ENCODE measurements at regions of chr7 and their contacts with region 1.

Region 1: GRCh38 chr7:30983042-30983913 is 19.5 kb downstream of the GHRHR start:
- DNase-seq: peak; percentile 90 to 99
- H3K4me3 ChIP-seq: peak overlapping the region in 1 of 4 experiments; percentile 59; a peak in 1 of 8 replicates
- H3K27ac ChIP-seq: no peak overlapping the region
- H3K4me1 ChIP-seq: peaks cover 13 to 41% (median 30%) of the 10 kb centered on the region in 4 experiments
- H3K27me3 ChIP-seq: peaks cover 0 to 7% (median 2%) of the 10 kb centered on the region in 4 experiments; a peak in 3 of 7 replicates
- CTCF ChIP-seq: peak; percentile 94 to 99 (median 99)
- EP300 ChIP-seq: no peak
- POLR2A ChIP-seq: no peak
- RAD21 ChIP-seq: peak; percentile 96 to 97

Region 2: DNA sequence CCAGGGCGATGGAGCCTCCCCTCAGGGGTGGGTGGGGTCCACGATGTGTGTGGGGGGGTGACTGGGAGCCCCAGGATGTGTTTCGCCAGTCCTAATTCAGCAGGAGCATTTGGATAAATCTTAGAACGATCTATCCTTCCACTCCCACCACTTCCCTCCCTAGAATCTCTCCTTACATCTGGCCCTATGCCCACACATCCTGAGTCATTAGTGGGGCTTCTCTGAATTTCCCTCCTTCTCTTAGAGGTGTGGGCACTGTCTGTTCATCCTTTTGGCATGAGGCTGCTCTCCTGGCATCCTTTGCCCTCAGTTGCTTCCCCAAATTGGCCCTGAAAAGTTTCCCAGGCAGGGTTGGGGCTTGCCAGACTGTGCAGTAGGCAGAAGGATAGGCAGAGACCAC is 17.9 kb before region 1 on chr7:
- CTCF ChIA-PET with region 1: interaction called, 65 read pairs
- POLR2A ChIA-PET with region 1: no interaction called
- DNase-seq: no peak
- H3K4me3 ChIP-seq: no peak overlapping the region
- H3K27ac ChIP-seq: no peak overlapping the region
- H3K4me1 ChIP-seq: no peaks in the 10 kb centered on the region
- H3K27me3 ChIP-seq: no peaks in the 10 kb centered on the region; a peak in 1 of 7 replicates
- CTCF ChIP-seq: no peak
- EP300 ChIP-seq: no peak
- POLR2A ChIP-seq: no peak
- RAD21 ChIP-seq: no peak

Region 3: GRCh38 chr7:31027161-31027965 is 44.1 kb after region 1 on chr7:
- CTCF ChIA-PET with region 1: interaction called, 58 read pairs
- POLR2A ChIA-PET with region 1: interaction called, 9 read pairs
- DNase-seq: peak in 1 of 2 experiments; percentile 55
- H3K4me3 ChIP-seq: no peak overlapping the region
- H3K27ac ChIP-seq: no peak overlapping the region
- H3K4me1 ChIP-seq: peaks cover 3 to 14% (median 10%) of the 10 kb centered on the region in 4 experiments
- H3K27me3 ChIP-seq: no peaks in the 10 kb centered on the region
- CTCF ChIP-seq: no peak
- EP300 ChIP-seq: no peak
- POLR2A ChIP-seq: no peak
- RAD21 ChIP-seq: no peak

Region 4: GRCh38 chr7:31051598-31052486 is 68.6 kb after region 1 on chr7 and contains the start of gene ADCYAP1R1:
- CTCF ChIA-PET with region 1: interaction called, 108 read pairs
- POLR2A ChIA-PET with region 1: interaction called, 11 read pairs
- DNase-seq: peak in 1 of 2 experiments; percentile 77
- H3K4me3 ChIP-seq: peak within 1 kb of the TSS; percentile 63 to 85 (median 66)
- H3K27ac ChIP-seq: no peak within 1 kb of the TSS
- H3K4me1 ChIP-seq: peaks cover 1 to 17% (median 8%) of the 10 kb centered on the region in 4 experiments
- H3K27me3 ChIP-seq: peaks cover 3 to 37% (median 25%) of the 10 kb centered on the region in 4 experiments
- CTCF ChIP-seq: peak in 2 of 3 experiments; percentile 25 to 26; a peak in 2 of 4 replicates
- EP300 ChIP-seq: no peak
- POLR2A ChIP-seq: no peak
- RAD21 ChIP-seq: no peak; a peak in 1 of 4 replicates
- total RNA-seq, gene ADCYAP1R1: 13.7 and 14.6 TPM in 2 replicates

Region 5: DNA sequence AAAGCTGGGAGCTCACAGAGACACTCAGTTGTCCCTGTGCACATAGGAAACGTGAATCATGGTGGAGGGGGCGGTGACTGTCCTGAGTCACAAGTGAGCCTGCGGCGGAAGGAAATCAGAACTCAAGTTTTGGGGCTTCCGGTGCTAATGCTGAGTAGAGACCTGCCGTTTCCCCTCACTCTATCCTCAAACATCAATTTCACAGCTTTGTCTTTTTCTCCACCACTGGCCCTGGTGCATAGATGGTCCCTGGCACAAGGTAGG is 90.8 kb after region 1 on chr7:
- CTCF ChIA-PET with region 1: interaction called, 218 read pairs
- POLR2A ChIA-PET with region 1: no interaction called
- DNase-seq: no peak
- H3K4me3 ChIP-seq: no peak overlapping the region
- H3K27ac ChIP-seq: no peak overlapping the region
- H3K4me1 ChIP-seq: no peaks in the 10 kb centered on the region; a peak in 1 of 7 replicates
- H3K27me3 ChIP-seq: no peaks in the 10 kb centered on the region
- CTCF ChIP-seq: no peak
- EP300 ChIP-seq: no peak
- POLR2A ChIP-seq: no peak
- RAD21 ChIP-seq: no peak

Region 6: GRCh38 chr7:31107121-31108090 is 124.1 kb after region 1 on chr7:
- CTCF ChIA-PET with region 1: interaction called, 25 read pairs
- POLR2A ChIA-PET with region 1: interaction called, 4 read pairs
- DNase-seq: peak in 1 of 2 experiments; percentile 22
- H3K4me3 ChIP-seq: no peak overlapping the region
- H3K27ac ChIP-seq: no peak overlapping the region
- H3K4me1 ChIP-seq: no peaks in the 10 kb centered on the region; a peak in 1 of 7 replicates
- H3K27me3 ChIP-seq: no peaks in the 10 kb centered on the region; a peak in 1 of 7 replicates
- CTCF ChIP-seq: no peak
- EP300 ChIP-seq: no peak
- POLR2A ChIP-seq: no peak
- RAD21 ChIP-seq: no peak

Region 7: DNA sequence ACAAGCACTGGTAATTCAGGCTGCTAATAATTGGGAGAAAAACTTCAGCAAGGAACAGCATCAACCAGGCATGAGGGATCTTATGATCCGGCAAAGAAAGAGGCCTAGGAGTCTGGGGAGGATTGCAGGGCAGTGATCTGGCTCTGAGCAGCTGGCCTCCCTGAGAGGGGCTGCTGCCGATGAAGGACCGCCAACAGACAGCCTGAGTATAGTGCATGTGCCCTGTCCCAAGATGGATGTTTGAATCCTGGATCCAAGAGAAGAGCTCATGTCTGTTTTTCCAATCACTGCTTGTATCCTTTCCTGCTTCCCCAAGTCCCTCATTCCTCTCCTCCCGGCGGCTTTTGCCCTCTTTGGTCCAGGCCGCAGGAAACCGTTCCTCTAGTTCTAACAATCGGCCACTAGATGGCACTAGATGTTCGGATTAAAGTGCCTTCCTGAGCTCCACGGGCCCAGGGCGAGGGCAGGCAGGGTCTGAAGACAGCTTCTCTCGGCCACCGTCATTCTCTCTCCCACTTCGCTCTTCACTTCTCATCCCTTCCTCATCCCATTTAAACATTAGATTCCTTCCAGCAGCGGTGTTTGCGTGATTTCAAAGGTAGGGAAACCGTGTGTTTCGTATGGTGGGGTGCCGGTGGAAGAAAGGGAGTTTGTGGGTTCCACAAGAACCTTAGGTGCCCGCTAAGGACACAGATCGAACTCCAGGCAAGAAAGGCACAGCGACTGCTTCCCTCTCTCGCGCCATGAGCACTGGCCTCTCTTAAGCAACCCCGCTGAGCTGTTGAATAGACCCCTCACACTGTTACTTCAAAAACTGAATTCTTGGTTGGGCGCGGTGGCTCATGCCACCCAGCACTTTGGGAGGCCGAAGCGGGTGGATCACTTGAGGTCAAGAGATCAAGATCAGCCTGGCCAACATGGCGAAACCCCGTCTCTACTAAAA is 151.2 kb after region 1 on chr7:
- CTCF ChIA-PET with region 1: interaction called, 517 read pairs
- POLR2A ChIA-PET with region 1: interaction called, 3 read pairs
- DNase-seq: peak; percentile 56 to 84
- H3K4me3 ChIP-seq: peak overlapping the region in 1 of 4 experiments; percentile 26; a peak in 1 of 8 replicates
- H3K27ac ChIP-seq: no peak overlapping the region
- H3K4me1 ChIP-seq: no peaks in the 10 kb centered on the region; a peak in 1 of 7 replicates
- H3K27me3 ChIP-seq: no peaks in the 10 kb centered on the region
- CTCF ChIP-seq: peak; percentile 50 to 83 (median 82)
- EP300 ChIP-seq: no peak
- POLR2A ChIP-seq: no peak
- RAD21 ChIP-seq: peak; percentile 87 to 93

Measured in H1 (cell line).